CD8-positive, alpha-beta T cell (primary cell): ENCODE measurements at regions of chr7 and their contacts with region 1.

Region 1: DNA sequence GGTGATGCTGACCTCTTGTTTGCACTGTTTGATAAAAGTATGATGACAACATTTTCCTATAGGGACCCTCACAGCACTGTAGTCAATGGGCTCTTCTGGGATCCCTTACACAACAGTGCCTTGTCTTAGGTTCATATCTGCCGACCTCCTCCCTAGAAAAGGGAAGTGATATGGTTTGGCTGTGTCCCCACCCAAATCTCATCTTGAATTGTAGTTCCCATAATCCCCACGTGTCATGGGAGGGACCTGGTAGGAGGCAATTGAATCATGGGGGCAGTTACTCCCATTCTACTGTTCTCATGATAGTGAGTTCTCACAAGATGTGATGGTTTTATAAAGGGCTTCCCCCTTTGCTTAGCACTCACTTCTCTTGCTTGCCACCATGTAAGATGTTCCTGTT is 23.1 kb downstream of the ZC3HAV1 start:
- DNase-seq: peak in 1 of 9 experiments; percentile 19
- ATAC-seq: no peak
- H3K4me3 ChIP-seq: no peak overlapping the region
- H3K4me3 Mint-ChIP-seq: no peak overlapping the region
- H3K27ac ChIP-seq: no peak overlapping the region
- H3K27ac Mint-ChIP-seq: peak overlapping the region; percentile 66
- H3K4me1 ChIP-seq: peaks cover 85% of the 10 kb centered on the region
- H3K4me1 Mint-ChIP-seq: peaks cover 83% of the 10 kb centered on the region
- H3K27me3 ChIP-seq: no peaks in the 10 kb centered on the region
- H3K27me3 Mint-ChIP-seq: no peaks in the 10 kb centered on the region
- CTCF ChIP-seq: no peak

Region 2: DNA sequence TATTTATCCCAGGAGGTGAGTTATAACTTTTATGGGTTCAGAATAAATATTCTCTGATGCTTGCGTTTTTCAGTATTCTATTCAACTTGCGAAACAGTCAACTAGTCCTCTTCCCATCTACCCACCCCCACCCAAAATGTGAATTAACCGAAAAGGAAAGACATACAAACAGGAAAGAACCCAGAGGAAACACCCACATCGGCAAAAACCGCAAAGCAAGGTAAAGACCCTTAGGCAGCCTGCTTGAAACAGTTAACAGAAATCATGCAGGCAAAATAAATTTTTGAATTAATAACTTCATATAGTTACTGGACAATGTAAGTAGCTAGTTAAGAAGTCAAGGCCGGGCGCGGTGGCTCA is 17.6 kb after region 1 on chr7:
- CTCF ChIA-PET with region 1: interaction called, 7 read pairs
- POLR2A ChIA-PET with region 1: interaction called, 20 read pairs
- intact Hi-C with region 1: no loop called
- DNase-seq: peak in 5 of 9 experiments; percentile 28 to 76 (median 48)
- ATAC-seq: no peak
- H3K4me3 ChIP-seq: peak overlapping the region; percentile 61 to 99
- H3K4me3 Mint-ChIP-seq: peak overlapping the region; percentile 93
- H3K27ac ChIP-seq: peak overlapping the region; percentile 61 to 97
- H3K27ac Mint-ChIP-seq: peak overlapping the region; percentile 93
- H3K4me1 ChIP-seq: peaks cover 21% of the 10 kb centered on the region
- H3K4me1 Mint-ChIP-seq: peaks cover 45% of the 10 kb centered on the region
- H3K27me3 ChIP-seq: no peaks in the 10 kb centered on the region
- H3K27me3 Mint-ChIP-seq: no peaks in the 10 kb centered on the region
- CTCF ChIP-seq: no peak

Region 3: DNA sequence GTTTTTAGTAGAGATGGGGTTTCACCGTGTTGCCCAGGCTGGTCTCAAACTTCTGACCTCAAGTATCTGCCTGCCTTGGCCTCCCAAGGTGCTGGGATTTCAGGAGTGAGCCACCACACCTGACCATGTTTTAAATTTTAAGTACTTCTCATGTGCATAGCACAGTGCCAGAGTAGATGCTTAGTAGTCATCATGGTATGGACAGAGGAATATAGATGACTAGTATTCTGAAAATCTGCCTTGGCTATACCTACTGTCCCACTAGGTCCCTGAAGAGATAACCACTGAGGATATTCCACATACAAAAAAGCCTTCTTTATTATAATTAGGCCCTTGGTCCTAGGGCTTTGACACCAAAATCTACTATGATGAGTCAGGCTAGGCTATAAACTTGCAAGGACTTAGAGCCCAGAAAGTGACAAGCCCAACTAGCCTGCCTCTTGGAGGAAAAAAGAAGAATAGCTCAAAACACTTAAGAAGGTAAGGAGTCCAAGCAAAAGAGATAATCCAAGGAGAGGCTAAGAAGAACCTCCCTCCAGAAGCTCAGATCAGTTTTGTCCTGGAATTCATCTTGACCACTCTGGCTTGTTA is 307.3 kb after region 1 on chr7:
- CTCF ChIA-PET with region 1: no interaction called
- POLR2A ChIA-PET with region 1: no interaction called
- intact Hi-C with region 1: no loop called
- DNase-seq: no peak
- ATAC-seq: peak; percentile 40
- H3K4me3 ChIP-seq: no peak overlapping the region
- H3K4me3 Mint-ChIP-seq: no peak overlapping the region
- H3K27ac ChIP-seq: peak overlapping the region in 1 of 2 experiments; percentile 21
- H3K27ac Mint-ChIP-seq: peak overlapping the region; percentile 62
- H3K4me1 ChIP-seq: peaks cover 33% of the 10 kb centered on the region
- H3K4me1 Mint-ChIP-seq: peaks cover 58% of the 10 kb centered on the region
- H3K27me3 ChIP-seq: no peaks in the 10 kb centered on the region
- H3K27me3 Mint-ChIP-seq: no peaks in the 10 kb centered on the region
- CTCF ChIP-seq: no peak